ENCODE measurements at regions of chr5 and their contacts with region 1.

Region 1: DNA sequence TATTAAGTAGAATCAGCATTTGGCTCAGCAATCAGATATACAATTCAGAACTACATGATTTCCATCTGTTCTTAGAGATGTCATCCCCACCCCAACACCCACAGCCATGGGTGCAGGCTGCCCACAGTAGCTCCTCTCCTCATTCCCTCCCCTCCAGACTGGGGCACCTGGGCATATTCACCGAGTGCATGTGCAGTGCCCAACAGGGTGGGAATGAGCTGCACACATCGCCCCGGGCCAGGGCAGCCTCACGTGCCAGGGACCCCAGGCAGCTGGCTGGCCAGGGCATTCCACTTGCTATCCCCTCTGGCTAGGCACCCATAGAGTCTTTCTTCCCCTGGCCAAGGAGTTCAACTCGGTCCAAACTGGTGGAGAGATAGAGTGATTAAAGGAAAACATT is 461.9 kb upstream of the NUDT12 start:
- DNase-seq: no peak
- ATAC-seq: no peak
- H3K4me3 ChIP-seq: no peak overlapping the region
- H3K27ac ChIP-seq: no peak overlapping the region
- H3K4me1 ChIP-seq: no peaks in the 10 kb centered on the region
- H3K27me3 ChIP-seq: no peaks in the 10 kb centered on the region
- CTCF ChIP-seq: no peak

Region 2: GRCh38 chr5:104986327-104986726 is 961.8 kb after region 1 on chr5:
- intact Hi-C with region 1: loop called in 1 of 10 experiments (anchors 10 kb)
- DNase-seq: no peak
- ATAC-seq: no peak
- H3K4me3 ChIP-seq: no peak overlapping the region
- H3K27ac ChIP-seq: no peak overlapping the region
- H3K4me1 ChIP-seq: no peaks in the 10 kb centered on the region
- H3K27me3 ChIP-seq: no peaks in the 10 kb centered on the region
- CTCF ChIP-seq: no peak

Measured in heart right ventricle (tissue), 16 donors.